ENCODE measurements at regions of chr17 and their contacts with region 1.

Region 1: GRCh38 chr17:11682646-11683045 is 84.4 kb downstream of the DNAH9 start:
- DNase-seq: no peak
- H3K27ac ChIP-seq: no peak overlapping the region
- CTCF ChIP-seq: no peak

Region 2: DNA sequence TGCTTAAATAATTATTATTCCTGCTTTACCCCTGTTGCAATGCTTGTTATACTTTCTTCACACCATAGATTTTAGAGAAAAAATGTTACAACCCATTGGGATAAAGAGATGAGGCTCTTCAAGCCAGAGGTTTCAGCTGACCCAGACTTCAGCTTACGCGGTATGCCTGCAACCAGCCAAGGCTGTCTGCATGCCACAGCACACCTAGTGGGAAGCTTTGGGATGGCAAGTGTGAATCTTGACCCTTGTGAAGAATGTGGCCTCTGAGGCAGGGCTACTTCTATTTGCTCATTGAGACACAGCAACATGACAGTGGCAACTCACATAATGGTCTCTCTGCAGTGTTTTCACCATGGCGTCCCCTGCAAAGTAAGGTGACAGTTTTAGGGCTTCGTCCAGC is 650.9 kb before region 1 on chr17:
- CTCF ChIA-PET with region 1: no interaction called
- POLR2A ChIA-PET with region 1: interaction called, 10 read pairs
- DNase-seq: no peak
- H3K27ac ChIP-seq: no peak overlapping the region
- CTCF ChIP-seq: no peak

Region 3: GRCh38 chr17:11719856-11720255 is 37.2 kb after region 1 on chr17:
- CTCF ChIA-PET with region 1: no interaction called
- POLR2A ChIA-PET with region 1: no interaction called
- DNase-seq: no peak
- H3K27ac ChIP-seq: no peak overlapping the region
- CTCF ChIP-seq: no peak